Right ventricle myocardium inferior (tissue), 1 donor: ENCODE measurements at regions of chr2 and their contacts with region 1.

Region 1: GRCh38 chr2:41926614-41927580 is 120.9 kb upstream of the PKDCC start:
- DNase-seq: no peak
- ATAC-seq: peak; percentile 24

Region 2: DNA sequence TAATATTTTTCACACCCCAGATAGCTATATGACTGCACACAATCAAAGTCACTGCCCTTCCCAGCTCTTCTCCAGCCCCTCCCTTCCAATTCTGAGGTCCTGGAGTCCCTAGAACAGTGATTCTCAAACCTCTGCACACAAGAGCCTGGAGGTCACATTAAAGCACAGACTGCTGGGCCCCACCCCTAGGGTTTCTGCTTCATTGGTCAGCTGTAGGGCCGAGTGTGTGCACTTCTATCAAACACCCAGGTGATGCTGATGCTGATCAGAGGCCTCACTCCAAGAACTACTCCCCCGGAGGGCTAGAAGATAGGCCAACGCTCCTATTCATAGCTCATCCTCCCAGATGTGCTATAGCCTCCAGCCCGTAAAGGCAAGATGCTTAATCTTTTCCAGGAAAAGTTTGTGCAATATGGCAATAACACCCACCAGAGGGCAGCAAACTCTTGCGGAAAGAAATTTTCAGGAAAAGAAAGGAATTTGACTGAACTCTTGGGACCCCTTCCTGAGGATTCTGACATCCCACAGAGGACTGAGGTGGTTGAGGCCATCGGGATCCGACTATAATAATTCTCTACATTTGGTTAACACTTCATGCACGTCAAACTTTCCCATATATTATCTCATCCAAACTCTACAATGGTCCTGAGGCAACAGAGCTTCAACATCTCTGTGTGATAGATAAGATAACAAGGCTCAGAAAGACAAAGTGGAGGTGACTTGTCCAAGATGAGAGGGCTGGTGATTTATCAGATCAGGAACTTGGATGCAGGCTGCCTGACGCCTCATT is 73.3 kb before region 1 on chr2:
- intact Hi-C with region 1: no loop called
- DNase-seq: no peak
- ATAC-seq: no peak

Region 3: DNA sequence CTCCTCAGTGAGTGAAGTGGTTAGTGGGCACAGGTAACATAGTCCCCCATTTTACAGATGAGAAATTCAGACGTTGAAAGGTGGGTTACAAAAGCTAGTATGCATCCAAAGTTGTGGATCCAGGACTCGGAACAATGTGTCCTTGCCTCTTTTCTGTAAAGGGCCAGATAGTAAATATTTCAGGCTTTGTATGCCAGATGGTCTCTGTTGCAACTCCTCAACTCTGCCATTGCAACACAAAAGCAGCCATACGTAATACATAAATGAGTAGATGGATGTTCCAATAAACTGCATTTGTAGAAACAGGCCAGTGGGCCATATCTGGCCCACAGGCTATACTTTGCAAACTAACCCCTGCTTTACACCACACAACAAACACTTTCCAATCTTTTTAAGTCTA is 45.6 kb before region 1 on chr2:
- intact Hi-C with region 1: no loop called
- DNase-seq: no peak
- ATAC-seq: no peak

Region 4: GRCh38 chr2:41947701-41948396 is 21.0 kb after region 1 on chr2:
- intact Hi-C with region 1: loop called (anchors 2 kb)
- DNase-seq: peak; percentile 83
- ATAC-seq: peak; percentile 93

Region 5: GRCh38 chr2:41994207-41994606 is 67.3 kb after region 1 on chr2:
- intact Hi-C with region 1: no loop called
- DNase-seq: no peak
- ATAC-seq: no peak

Region 6: GRCh38 chr2:42053791-42054701 is 127.1 kb after region 1 on chr2:
- intact Hi-C with region 1: loop called (anchors 2 kb)
- DNase-seq: no peak
- ATAC-seq: peak; percentile 70